Gastrocnemius medialis (tissue), 4 donors: ENCODE measurements at regions of chr10 and their contacts with region 1.

Region 1: DNA sequence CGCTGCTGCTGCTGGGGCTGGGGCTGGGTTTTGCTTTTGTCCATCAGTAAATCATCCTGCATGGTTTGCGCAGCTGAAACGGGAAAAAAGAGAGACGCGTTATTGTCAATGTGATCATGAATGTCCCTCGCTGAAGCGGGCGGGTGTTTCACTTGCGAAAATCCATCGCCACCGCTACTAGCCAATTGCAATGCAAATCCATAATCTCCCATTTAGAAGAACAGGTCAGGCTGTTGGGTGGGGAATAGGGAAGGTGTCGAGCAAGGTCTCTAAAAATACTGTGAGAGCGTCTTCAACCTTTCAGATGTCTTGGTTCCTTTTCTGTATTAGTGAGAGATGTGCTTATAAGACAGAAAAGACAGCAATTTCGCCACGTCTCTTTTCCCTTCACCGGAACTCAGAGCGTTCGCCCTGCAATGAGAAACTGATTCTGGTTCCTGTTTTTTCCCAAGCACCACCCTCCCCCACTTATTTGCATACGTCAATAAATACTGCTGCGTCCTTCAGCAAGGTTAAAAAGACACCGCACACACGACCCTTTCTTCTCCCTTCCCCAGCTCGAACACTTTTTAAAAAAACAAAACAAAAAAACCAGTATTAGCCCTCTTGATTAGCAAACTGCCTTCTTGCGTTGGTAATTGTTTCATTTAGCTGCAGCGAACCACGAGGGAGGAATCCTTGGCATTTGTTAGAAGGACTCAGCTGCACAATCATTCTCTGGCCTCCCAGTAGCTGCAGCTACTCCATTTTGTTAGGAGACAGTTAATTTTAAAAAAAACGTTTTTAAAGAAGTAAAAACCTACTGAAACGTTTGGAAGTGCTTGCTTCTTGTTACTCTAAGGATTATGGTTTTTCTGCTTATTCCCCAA is 50.4 kb downstream of the CPEB3 start:
- DNase-seq: peak; percentile 70 to 77
- ATAC-seq: peak; percentile 68 to 75
- H3K4me3 ChIP-seq: peak overlapping the region; percentile 76 to 80 (median 78)
- H3K27ac ChIP-seq: peak overlapping the region; percentile 89 to 95 (median 94)
- H3K4me1 ChIP-seq: peaks cover 54 to 62% of the 10 kb centered on the region in 2 donors
- H3K27me3 ChIP-seq: no peaks in the 10 kb centered on the region
- CTCF ChIP-seq: no peak
- POLR2A ChIP-seq: peak; percentile 53 to 84

Region 2: DNA sequence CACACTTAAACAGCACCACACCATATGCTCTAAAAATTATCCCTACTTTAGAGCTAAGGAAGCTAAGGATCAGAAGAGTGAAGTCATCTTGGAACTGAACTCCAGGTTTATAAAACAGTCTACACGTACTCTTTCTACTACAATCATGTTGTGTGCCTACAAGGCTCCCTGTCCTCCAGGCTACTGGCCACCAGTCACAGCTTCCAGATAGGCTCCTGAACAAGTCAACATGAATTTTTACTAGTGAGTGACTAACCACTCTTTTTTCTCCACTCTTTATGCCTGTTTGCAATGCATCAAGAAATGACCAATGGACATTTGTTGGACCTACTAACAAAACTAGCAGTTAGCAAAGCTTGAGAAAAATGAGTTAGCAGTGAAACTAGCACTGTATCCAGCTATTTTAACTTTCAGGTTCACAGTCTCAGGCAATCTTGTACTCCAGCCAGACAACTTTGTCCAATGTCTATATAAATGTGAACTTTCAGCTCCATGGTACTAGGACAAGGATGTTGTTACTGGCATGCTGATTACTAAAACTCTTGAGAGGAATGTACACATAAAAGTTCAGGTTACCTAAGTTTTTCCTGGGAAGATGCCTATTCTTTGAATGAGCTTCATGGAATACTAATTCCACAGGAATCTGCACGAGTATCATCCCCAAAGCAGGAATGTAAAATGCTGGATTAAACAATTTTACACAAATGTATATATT is 137.0 kb before region 1 on chr10:
- in situ Hi-C with region 1: loop called in 1 of 4 experiments (anchors 10 kb)
- intact Hi-C with region 1: loop called (anchors 5 kb)
- DNase-seq: no peak
- ATAC-seq: no peak
- H3K4me3 ChIP-seq: no peak overlapping the region
- H3K27ac ChIP-seq: peak overlapping the region in 3 of 4 donors; percentile 74 to 83 (median 80)
- H3K4me1 ChIP-seq: peaks cover 43 to 49% of the 10 kb centered on the region in 2 donors
- H3K27me3 ChIP-seq: no peaks in the 10 kb centered on the region
- CTCF ChIP-seq: no peak
- POLR2A ChIP-seq: no peak

Region 3: DNA sequence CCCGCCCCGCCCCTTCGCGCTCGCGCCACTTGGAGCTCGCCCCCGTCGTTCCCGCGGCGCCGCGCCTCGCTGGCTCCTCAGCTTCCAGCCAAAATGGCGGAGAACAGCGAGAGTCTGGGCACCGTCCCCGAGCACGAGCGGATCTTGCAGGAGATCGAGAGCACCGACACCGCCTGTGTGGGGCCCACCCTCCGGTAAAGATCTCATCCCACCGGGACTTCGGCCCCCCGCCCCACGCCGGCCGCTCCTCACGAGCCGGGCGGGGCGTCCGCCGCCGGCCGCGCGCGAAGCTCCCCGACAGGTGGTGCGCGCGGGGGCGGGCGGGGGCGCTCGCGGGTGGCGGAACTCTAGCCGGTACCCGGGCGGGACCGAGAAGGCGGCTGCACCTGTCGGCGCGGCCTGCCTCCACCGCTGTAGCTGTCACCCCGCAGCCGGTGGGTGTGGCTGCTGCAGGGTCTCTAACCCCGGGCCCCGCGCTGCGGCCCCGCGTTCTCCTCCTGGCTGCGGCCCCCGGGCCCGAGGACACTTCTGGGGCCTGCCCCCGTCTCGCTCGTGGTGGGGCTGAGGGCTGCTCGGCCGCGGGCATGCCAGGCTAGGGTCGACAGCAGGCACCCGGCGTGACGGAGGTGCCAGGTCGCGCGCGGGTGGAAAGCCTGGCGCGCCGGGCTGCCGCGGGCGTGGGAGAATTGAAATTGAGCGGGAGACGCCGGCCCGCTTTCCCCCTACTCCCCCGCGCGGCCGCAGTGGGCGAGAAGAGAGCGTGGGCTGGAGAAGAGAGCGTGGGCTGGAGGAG is 608.1 kb after region 1 on chr10 and contains the start of gene EXOC6:
- in situ Hi-C with region 1: no loop called
- intact Hi-C with region 1: loop called (anchors 5 kb)
- DNase-seq: peak; percentile 69 to 81
- ATAC-seq: peak; percentile 92 to 93
- H3K4me3 ChIP-seq: peak within 1 kb of the TSS; percentile 74 to 99 (median 94)
- H3K27ac ChIP-seq: peak within 1 kb of the TSS; percentile 79 to 95 (median 88)
- H3K4me1 ChIP-seq: peaks cover 8 to 21% of the 10 kb centered on the region in 2 donors
- H3K27me3 ChIP-seq: no peaks in the 10 kb centered on the region
- CTCF ChIP-seq: peak in 2 of 5 experiments; percentile 15 to 24
- POLR2A ChIP-seq: peak in 1 of 2 donors; percentile 29
- total RNA-seq, gene EXOC6: 11.8 to 16.8 (median 14.6) TPM